ENCODE measurements at regions of chr11 and their contacts with region 1.

Region 1: GRCh38 chr11:76919887-76920746 is 59.4 kb downstream of the ACER3 start:
- DNase-seq: peak in 9 of 10 donors; percentile 36 to 93 (median 67)

Region 2: GRCh38 chr11:76734456-76735420 is 185.4 kb before region 1 on chr11:
- intact Hi-C with region 1: loop called (anchors 5 kb)
- DNase-seq: peak in 1 of 10 donors; percentile 24

Region 3: DNA sequence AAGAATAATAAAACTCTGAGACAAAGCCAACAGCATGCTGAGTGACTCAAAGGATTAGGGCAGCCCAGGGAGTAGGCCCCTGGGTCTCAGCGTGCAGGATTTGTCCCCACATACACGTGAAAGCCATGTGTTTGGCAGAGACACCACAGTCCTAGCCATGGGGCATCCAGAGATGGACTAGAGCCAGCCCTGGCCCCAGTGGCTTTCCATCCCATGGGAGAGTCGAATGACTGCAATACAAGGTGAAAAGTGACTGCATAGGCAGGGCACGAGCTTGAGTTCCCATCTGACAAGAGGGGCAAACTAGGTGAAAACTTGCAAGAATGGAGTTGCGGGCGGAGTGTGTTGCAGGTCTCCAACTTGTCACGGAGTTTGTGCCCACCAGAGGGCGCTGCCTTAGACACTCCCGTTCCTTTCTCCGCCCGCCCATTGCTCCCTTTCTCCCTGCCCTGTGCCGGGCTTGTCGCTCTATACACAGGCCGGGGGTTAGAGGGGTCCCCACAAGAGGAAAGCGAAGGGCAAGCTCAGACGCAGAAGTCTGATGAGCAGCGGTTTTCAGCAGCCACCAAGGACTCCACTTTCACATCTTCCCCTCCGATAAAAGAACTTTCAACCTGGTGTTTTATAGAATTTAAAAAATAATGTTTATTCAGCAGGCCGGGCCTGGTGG is 112.8 kb before region 1 on chr11:
- intact Hi-C with region 1: loop called (anchors 1 kb)
- DNase-seq: peak; percentile 68 to 97 (median 88)

Region 4: GRCh38 chr11:76860539-76861475 is 59.3 kb before region 1 on chr11 and contains the start of gene ACER3:
- intact Hi-C with region 1: loop called (anchors 2 kb)
- DNase-seq: peak; percentile 75 to 98 (median 86)

Measured in posterior cingulate gyrus (tissue), 11 donors.